Panc1 (cell line): ENCODE measurements at regions of chr15 and their contacts with region 1.

Region 1: GRCh38 chr15:43279491-43279890 is 12.8 kb upstream of the TGM5 start:
- DNase-seq: no peak
- ATAC-seq: no peak; the same call in 1 of the 2 replicates
- H3K4me3 ChIP-seq: no peak overlapping the region
- H3K27ac ChIP-seq: no peak overlapping the region
- H3K4me1 ChIP-seq: no peaks in the 10 kb centered on the region
- H3K27me3 ChIP-seq: no peaks in the 10 kb centered on the region
- CTCF ChIP-seq: no peak

Region 2: DNA sequence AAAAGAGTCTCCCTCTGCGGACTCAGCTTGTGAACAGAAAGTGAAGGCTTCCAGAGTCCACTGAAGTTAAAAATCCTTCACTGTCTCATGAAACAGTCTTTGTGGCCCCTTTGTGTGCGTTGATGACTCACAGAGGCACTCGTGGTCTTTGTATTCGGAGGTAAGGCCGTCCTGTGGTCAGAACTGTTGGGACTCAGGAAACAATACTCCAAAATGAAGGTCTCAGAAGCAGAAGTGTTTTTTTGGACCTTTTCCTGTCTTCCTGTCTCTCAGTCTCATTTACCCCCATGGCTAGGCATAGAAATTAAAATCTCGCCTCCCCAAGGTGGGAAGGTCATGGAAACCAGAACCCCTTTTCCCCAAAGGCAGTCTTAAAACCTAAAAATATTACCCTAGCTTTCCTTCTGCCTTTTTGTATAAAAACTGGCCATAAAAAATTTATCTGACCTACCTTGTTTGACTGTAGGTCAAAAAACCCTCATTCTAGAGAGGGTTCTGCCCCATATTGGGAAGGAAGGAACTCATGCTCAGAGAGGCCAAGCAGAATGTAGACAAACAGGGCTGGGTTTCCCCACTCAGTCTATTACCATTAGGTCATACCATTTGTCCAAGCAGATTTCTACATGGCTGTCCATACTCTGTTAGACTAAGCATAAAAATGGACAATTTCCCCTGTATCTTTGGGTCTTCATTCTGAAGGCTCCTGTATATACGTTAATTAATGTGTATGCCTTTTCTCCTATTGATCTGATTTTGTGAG is 39.6 kb before region 1 on chr15:
- CTCF ChIA-PET with region 1: no interaction called
- POLR2A ChIA-PET with region 1: interaction called, 21 read pairs
- in situ Hi-C with region 1: no loop called
- intact Hi-C with region 1: no loop called
- DNase-seq: no peak
- ATAC-seq: no peak
- H3K4me3 ChIP-seq: no peak overlapping the region
- H3K27ac ChIP-seq: no peak overlapping the region
- H3K4me1 ChIP-seq: no peaks in the 10 kb centered on the region
- H3K27me3 ChIP-seq: peaks cover 14% of the 10 kb centered on the region; the same call in 1 of the 2 replicates
- CTCF ChIP-seq: no peak